ENCODE measurements at regions of chr12 and their contacts with region 1.

Region 1: GRCh38 chr12:38316391-38317129 is at the start of gene ALG10B:
- DNase-seq: peak; percentile 99

Region 2: DNA sequence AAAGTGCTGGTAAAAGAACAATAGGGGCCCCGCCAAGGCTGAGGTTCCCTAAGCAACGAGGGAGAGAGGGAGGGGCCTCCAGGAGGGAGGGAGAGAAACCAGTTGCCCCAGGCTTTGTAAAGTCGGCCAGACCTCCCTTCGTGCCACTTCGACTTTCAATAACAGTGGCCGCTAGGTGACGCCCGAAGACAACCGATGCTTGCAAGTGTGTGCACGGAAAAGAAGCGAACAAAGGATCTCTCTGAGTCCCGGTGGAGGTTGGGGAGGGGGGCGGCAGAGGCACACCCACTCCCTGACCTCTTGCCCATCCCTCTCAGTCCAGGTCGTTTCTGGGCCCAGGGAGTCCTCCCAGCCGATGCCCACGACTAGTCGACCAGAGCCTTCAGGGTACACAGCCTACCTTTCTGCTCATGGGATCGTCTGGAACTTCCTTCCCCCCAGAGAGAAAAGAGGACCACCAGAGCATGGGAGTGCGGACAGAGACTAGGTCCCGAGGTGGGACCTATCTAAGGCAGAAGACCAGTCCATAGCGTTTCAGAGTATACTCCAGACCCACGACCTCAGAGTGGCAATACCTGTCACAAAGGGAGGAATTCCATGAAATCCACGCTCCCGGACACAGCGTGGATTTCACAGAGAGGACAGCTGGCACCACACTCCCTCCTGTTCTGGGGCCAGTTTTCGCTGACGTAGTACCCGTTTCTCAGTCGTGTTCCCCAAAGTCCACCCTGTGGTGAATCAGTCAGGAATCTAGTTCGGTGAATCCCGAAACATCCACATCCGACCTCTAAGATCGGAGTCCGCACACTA is 262.7 kb before region 1 on chr12:
- in situ Hi-C with region 1: loop called (anchors 25 kb)
- DNase-seq: peak; percentile 79

Region 3: GRCh38 chr12:38138225-38139221 is 178.0 kb before region 1 on chr12:
- in situ Hi-C with region 1: loop called (anchors 25 kb)
- DNase-seq: peak; percentile 86

Region 4: DNA sequence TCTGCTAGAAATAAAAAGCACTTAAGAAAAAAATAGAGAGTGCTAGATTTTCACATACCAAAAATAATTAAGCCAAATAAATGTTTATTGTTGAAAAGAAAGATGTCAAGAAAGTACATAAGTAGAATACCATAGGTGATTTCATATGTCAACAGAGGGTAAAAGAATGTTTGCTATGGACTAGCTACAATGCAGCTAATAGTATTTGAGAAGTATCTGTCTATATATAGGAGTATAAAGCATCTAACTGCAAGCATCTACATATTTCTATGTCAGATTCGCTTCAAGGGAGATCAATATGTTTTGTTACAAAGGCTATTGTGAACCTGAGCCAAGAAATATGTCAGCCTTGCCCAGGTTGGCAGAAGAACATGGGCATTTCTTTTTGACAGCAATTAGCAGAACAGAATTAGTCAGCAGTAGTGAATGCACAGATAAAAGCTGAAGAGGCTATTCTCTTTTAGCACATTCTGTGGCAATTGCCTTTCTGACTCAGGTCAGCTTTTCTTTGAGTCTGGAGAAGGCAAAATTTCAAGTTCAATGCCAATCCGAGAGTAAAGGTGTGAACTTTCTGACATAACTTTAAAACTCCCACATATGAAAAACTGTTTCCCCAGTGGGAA is 140.1 kb after region 1 on chr12:
- in situ Hi-C with region 1: no loop called
- DNase-seq: no peak